Activated CD8-positive, alpha-beta T cell treated with anti-CD3 and anti-CD28 coated beads for 36 hours (primary cell): ENCODE measurements at regions of chr16 and their contacts with region 1.

Region 1: DNA sequence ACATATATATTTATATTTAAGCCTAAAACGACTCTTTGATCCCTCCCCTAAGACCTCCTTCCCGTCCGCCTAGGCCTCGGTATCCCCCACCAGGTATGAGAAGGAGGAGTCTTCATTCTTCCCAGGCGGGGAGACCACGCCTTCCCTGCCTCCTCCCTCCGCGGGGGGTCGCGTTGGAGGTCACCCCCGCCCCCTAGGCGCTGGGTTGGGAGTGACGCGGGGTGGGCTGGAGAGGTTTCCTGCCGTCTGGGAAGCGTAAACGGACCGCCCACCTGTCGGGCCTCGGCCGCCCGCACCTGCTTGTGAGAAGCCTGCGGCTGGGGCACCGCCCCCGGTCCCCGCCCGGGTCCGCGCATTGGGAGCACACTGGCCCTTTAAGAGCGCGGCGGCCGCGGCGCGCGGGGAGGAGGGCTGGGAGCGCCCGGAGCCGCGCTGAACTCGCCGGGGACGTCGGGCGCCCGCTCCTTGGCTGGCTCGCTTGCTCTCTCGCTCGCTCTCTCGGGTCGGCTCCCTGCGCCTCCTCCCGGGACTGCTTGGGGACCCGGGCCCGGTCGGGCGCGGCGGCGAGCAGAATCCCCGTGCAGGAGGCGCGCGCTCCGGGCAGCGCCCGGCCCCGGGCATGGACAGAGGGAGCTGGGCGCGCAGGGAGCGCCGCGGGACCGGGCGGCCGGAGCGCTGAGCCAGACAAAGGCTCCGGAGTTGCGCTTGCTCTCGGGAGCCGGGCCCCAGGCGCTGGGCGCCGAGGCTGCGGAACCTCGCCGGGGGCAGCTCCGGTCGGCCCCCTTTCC is at the start of gene MMP15:
- DNase-seq: peak; percentile 73
- ATAC-seq: peak; percentile 69
- H3K4me3 Mint-ChIP-seq: peak within 1 kb of the TSS; percentile 75
- H3K27ac Mint-ChIP-seq: peak within 1 kb of the TSS; percentile 72
- H3K4me1 Mint-ChIP-seq: peaks cover 11% of the 10 kb centered on the region
- H3K27me3 Mint-ChIP-seq: peaks cover 5% of the 10 kb centered on the region
- CTCF ChIP-seq: no peak
- total RNA-seq, gene MMP15: 0.25 to 0.63 TPM

Region 2: DNA sequence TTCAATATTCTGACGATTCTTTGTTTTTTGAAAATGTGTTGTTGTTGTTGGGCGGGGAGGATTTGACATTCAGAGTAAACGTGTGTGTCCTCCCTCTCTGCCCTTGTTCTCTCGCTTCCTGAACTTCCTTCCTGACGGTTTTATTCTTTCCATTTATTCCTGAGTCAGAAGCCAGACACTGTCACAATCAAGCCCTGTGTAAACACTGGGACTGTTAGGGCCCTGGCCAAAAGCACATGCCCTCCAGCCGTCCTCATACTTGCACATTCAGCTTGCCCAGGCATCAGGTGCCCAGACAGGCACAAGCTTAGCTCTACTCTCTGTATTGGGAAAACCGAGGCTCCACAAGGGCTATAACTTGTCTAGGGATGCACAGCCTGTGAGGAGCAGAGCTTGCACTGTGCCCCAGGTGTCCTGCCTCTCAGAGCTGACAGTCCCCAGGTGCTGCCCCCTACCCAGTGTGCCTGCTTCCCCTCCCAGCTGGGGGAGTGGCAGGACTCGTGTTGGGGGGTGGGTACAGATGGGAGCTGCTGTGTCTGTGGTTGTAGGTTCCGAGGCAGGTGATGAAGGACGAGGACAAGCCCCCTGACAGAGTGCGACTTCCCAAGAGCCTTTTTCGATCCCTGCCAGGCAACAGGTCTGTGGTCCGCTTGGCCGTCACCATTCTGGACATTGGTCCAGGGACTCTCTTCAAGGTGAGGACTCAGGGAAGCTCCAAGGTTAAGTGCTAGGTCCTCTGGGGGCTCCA is 347.7 kb before region 1 on chr16:
- CTCF ChIA-PET with region 1: no interaction called
- POLR2A ChIA-PET with region 1: no interaction called
- intact Hi-C with region 1: no loop called
- DNase-seq: no peak
- ATAC-seq: no peak
- H3K4me3 Mint-ChIP-seq: no peak overlapping the region
- H3K27ac Mint-ChIP-seq: no peak overlapping the region
- H3K4me1 Mint-ChIP-seq: no peaks in the 10 kb centered on the region
- H3K27me3 Mint-ChIP-seq: no peaks in the 10 kb centered on the region
- CTCF ChIP-seq: no peak

Region 3: GRCh38 chr16:58129097-58129936 is 103.8 kb after region 1 on chr16 and contains the start of gene CFAP20:
- CTCF ChIA-PET with region 1: interaction called, 16 read pairs
- POLR2A ChIA-PET with region 1: interaction called, 3 read pairs
- intact Hi-C with region 1: loop called (anchors 5 kb)
- DNase-seq: peak; percentile 99
- ATAC-seq: peak; percentile 96
- H3K4me3 Mint-ChIP-seq: peak within 1 kb of the TSS; percentile 90
- H3K27ac Mint-ChIP-seq: peak within 1 kb of the TSS; percentile 96
- H3K4me1 Mint-ChIP-seq: peaks cover 39% of the 10 kb centered on the region
- H3K27me3 Mint-ChIP-seq: no peaks in the 10 kb centered on the region
- CTCF ChIP-seq: no peak
- total RNA-seq, gene CFAP20: 36.5 to 40.4 TPM

Region 4: GRCh38 chr16:58306327-58306726 is 280.8 kb after region 1 on chr16:
- CTCF ChIA-PET with region 1: interaction called, 3 read pairs
- POLR2A ChIA-PET with region 1: no interaction called
- intact Hi-C with region 1: loop called (anchors 10 kb)
- DNase-seq: peak; percentile 81
- ATAC-seq: no peak
- H3K4me3 Mint-ChIP-seq: no peak overlapping the region
- H3K27ac Mint-ChIP-seq: no peak overlapping the region
- H3K4me1 Mint-ChIP-seq: no peaks in the 10 kb centered on the region
- H3K27me3 Mint-ChIP-seq: peaks cover 10% of the 10 kb centered on the region
- CTCF ChIP-seq: peak; percentile 71